PC-3 (cell line): ENCODE measurements at regions of chr3 and their contacts with region 1.

Region 1: DNA sequence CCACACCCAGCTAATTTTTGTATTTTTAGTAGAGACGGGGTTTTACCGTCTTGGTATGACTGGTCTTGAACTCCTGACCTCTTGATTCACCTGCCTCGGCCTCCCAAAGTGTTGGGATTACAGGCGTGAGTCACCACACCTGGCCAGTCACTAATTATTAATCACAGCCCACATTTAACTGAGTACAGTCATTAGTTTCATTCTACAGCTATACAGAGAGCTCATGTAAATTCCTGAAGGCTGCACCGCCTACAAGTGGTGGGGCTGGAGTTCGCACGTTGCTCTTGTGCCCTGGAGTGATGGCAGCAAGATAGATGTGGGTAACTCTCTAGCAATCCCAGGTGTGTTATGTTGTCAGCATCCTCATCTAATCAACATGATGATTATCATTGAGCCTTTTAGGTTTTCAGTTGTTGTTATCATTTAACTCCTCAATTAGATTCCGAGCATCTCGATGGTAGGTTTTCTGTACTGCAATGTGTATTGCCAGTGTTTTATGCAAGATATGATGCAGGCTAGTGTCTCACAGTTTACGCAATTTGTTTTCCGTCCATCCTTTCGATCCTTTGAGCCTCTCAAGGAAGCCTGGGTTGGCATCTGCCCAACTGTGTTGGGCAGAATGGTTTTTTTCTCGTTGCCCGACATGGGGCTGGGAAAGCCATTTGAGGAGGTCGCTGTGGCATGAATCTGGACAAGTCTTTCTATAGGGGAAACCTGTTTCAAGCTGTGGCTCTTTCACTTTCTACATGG is 216.3 kb downstream of the LPP start:
- DNase-seq: no peak
- ATAC-seq: no peak
- H3K4me3 ChIP-seq: no peak overlapping the region
- H3K27ac ChIP-seq: no peak overlapping the region
- H3K4me1 ChIP-seq: peaks cover 13% of the 10 kb centered on the region
- H3K27me3 ChIP-seq: no peaks in the 10 kb centered on the region
- CTCF ChIP-seq: peak; percentile 27; the same call in 1 of the 2 replicates

Region 2: GRCh38 chr3:187986514-187986934 is 383.7 kb before region 1 on chr3:
- CTCF ChIA-PET with region 1: no interaction called
- POLR2A ChIA-PET with region 1: no interaction called
- intact Hi-C with region 1: no loop called
- DNase-seq: peak; percentile 94
- ATAC-seq: peak; percentile 97
- H3K4me3 ChIP-seq: no peak overlapping the region
- H3K27ac ChIP-seq: peak overlapping the region; percentile 74
- H3K4me1 ChIP-seq: peaks cover 21% of the 10 kb centered on the region
- H3K27me3 ChIP-seq: no peaks in the 10 kb centered on the region
- CTCF ChIP-seq: no peak

Region 3: DNA sequence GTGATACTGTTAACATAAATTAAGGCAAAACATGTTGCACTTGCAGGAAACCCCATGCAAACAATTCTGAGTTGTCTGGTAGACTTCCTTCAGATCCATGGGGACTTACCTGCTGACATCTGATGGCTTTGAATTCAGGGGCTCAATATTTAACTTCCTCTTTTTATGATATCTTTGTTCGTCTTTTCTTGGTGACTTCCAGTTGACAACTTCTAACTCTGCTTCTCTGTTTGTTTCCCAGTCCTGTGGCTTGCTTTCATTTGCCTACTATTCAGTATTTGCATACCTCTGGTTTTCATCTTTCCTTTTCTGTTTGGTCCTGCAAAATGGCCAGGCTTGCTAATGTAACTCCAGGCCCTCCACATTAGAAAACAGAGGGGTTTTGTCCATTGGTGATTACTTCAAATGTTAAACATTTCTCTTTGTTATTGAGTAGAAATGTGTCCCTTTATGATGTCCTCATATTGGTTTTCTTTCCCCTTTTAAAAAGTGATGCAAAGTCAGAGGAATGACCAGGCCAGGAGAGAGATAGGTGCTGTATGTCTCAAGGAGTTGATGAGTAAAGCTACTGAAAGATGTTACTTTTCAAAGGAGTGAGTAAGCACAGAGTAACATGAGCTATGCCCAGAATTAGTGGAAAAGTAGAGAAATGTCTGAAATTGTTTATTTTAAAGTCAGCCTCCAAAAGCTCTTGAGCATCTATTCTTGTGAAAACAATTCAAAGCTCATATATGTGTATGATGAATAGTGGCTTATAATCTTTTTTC is 119.6 kb after region 1 on chr3:
- CTCF ChIA-PET with region 1: no interaction called
- POLR2A ChIA-PET with region 1: interaction called, 10 read pairs
- intact Hi-C with region 1: no loop called
- DNase-seq: no peak
- ATAC-seq: peak; percentile 10; the same call in 1 of the 2 replicates
- H3K4me3 ChIP-seq: no peak overlapping the region
- H3K27ac ChIP-seq: no peak overlapping the region
- H3K4me1 ChIP-seq: peaks cover 21% of the 10 kb centered on the region
- H3K27me3 ChIP-seq: no peaks in the 10 kb centered on the region
- CTCF ChIP-seq: no peak